Activated CD8-positive, alpha-beta memory T cell treated with anti-CD3 and anti-CD28 coated beads, Interleukin-2, amount 10 ng/mL, durations not matched to agents 7 days and 5 days (primary cell): ENCODE measurements at regions of chr4 and their contacts with region 1.

Region 1: GRCh38 chr4:147617173-147617840 is at the start of gene TMEM184C:
- DNase-seq: peak; percentile 99
- ATAC-seq: peak; percentile 99
- H3K4me3 Mint-ChIP-seq: peak within 1 kb of the TSS; percentile 95
- H3K27ac Mint-ChIP-seq: peak within 1 kb of the TSS; percentile 94
- H3K4me1 Mint-ChIP-seq: peaks cover 38% of the 10 kb centered on the region
- H3K27me3 Mint-ChIP-seq: peaks cover 15% of the 10 kb centered on the region
- total RNA-seq, gene TMEM184C: 18.5 to 27.2 TPM

Region 2: DNA sequence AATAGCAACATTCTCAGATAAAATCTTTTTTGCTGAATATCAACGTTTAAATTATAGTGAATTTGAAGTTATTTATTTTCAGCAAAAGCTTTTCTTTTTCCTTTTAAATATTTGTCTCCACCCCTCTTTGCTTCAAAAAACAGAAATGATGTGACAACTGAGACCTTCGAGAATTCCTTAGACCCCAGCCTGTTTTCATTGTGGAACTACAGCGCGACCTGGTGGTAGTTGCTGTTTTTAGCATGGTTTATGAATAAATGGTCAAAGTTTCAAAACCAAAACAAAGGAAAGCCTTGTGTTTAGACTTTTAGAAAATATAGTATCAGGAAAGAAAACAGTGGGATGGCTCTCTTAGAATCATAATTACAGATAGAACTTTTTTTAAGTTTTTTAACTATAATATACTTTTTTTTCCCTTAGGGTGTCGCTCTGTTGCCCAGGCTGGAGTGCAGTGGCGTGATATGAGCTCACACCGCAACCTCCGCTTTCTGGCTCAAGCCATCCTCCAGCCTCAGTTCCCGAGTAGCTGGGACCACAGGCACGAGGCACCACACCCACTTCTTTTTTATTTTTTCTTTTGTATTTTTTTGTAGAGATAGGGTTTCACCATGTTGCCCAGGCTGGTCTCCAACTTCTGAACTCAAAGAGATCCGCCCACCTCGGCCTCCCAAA is 26.9 kb before region 1 on chr4:
- CTCF ChIA-PET with region 1: interaction called, 12 read pairs
- DNase-seq: peak; percentile 59
- ATAC-seq: no peak
- H3K4me3 Mint-ChIP-seq: no peak overlapping the region
- H3K27ac Mint-ChIP-seq: no peak overlapping the region
- H3K4me1 Mint-ChIP-seq: peaks cover 21% of the 10 kb centered on the region
- H3K27me3 Mint-ChIP-seq: peaks cover 8% of the 10 kb centered on the region

Region 3: GRCh38 chr4:147596981-147597380 is 20.3 kb before region 1 on chr4:
- CTCF ChIA-PET with region 1: interaction called, 12 read pairs
- DNase-seq: no peak
- ATAC-seq: no peak
- H3K4me3 Mint-ChIP-seq: no peak overlapping the region
- H3K27ac Mint-ChIP-seq: no peak overlapping the region
- H3K4me1 Mint-ChIP-seq: peaks cover 6% of the 10 kb centered on the region
- H3K27me3 Mint-ChIP-seq: peaks cover 3% of the 10 kb centered on the region

Region 4: GRCh38 chr4:147651563-147651962 is 34.3 kb after region 1 on chr4:
- CTCF ChIA-PET with region 1: no interaction called
- DNase-seq: no peak
- ATAC-seq: peak; percentile 47
- H3K4me3 Mint-ChIP-seq: no peak overlapping the region
- H3K27ac Mint-ChIP-seq: no peak overlapping the region
- H3K4me1 Mint-ChIP-seq: peaks cover 9% of the 10 kb centered on the region
- H3K27me3 Mint-ChIP-seq: no peaks in the 10 kb centered on the region

Region 5: GRCh38 chr4:147683717-147684700 is 66.7 kb after region 1 on chr4 and contains the start of gene PRMT9:
- CTCF ChIA-PET with region 1: interaction called, 13 read pairs
- DNase-seq: peak; percentile 93
- ATAC-seq: peak; percentile 99
- H3K4me3 Mint-ChIP-seq: peak within 1 kb of the TSS; percentile 92
- H3K27ac Mint-ChIP-seq: peak within 1 kb of the TSS; percentile 92
- H3K4me1 Mint-ChIP-seq: peaks cover 40% of the 10 kb centered on the region
- H3K27me3 Mint-ChIP-seq: peaks cover 5% of the 10 kb centered on the region
- total RNA-seq, gene PRMT9: 11.9 to 12.0 TPM